ENCODE measurements at regions of chr6 and their contacts with region 1.

Region 1: DNA sequence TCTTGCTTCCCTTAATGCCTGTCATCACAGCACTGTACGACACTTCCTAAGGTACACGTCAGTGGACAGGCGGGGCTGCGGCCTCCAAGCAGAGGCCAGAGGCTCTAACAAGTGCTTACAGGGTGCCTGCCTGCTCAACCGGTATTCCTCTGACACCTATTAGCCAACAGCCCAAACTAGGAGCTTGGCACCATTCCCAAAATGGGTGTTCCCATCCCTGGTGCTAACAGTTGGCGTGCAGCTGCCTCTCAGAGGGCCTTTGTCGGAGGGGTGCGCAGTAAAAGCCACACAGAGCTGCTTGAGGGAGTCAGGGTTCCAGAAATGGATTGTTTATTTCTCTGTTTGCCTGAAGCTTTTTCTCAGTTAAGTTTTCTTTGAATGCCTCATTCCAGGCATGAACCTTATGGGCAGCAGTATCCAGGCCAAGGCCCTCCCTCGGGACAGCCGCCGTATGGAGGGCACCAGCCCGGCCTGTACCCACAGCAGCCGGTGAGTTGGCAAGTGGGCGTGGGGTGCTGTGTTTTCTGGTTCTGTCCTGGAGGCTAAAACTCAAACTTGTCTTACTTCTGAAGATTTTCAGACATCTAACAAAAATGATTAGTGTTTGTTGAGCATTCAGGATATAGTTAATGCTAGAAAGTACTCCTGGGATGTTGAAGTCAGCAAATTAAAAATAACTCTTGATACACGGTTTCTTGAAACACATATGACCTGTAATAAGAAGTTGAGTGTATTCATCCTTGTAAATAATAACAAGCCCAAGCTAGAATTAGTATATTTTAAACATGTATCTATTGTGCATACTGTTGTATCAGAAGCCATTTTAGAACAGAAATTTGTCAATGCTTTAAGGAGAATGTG is 124.7 kb downstream of the TMEM242 start:
- DNase-seq: peak; percentile 78 to 86
- ATAC-seq: peak; percentile 81
- H3K4me3 ChIP-seq: peak overlapping the region in 1 of 2 donors; percentile 1
- H3K27ac ChIP-seq: peak overlapping the region; percentile 45 to 80
- H3K4me1 ChIP-seq: no peaks in the 10 kb centered on the region
- H3K27me3 ChIP-seq: no peaks in the 10 kb centered on the region

Region 2: DNA sequence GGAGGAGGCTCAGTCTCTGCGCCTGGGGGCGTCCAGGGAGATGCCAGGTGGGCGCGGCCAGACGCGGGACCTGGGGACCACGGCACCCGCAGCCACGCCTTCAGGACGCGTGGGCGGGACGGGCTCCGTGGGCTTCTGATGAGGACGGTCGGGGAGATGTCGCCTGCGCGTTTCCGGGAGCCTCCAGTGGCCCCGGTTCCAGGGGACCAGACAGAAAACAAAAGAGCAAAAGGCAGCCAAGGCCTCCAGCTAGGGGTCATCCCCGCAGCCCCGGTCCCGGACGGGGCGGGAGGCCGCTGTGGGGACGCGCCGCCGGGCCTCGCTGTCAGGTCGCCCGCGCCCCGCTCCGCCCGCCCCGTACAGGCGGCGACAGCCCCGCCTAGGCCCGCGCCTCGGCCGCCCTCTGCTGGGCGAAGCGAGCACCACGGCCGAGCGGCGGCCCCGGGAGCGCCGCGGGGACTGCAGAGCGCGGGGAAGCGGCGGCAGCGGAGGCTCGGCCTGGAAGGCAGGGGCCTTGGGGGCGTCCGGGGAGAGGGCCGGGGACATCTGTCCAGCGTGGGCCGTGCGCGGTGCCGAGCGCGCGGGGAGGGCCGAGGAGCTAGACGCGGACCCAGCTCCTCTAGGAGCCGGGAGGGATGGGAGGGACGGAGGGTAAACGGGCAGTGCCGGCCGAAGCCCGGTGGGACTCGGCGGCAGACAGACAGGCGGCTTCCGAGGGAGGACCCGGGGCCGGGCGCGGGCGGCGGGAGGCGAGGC is 76.0 kb after region 1 on chr6:
- intact Hi-C with region 1: loop called in 1 of 2 experiments (anchors 5 kb)
- DNase-seq: peak; percentile 78 to 93
- ATAC-seq: peak; percentile 97
- H3K4me3 ChIP-seq: peak overlapping the region; percentile 48 to 71
- H3K27ac ChIP-seq: peak overlapping the region in 1 of 2 donors; percentile 90
- H3K4me1 ChIP-seq: no peaks in the 10 kb centered on the region
- H3K27me3 ChIP-seq: no peaks in the 10 kb centered on the region

Measured in aorta (tissue), 5 donors.